Posterior cingulate gyrus (tissue), 11 donors: ENCODE measurements at regions of chr6 and their contacts with region 1.

Region 1: DNA sequence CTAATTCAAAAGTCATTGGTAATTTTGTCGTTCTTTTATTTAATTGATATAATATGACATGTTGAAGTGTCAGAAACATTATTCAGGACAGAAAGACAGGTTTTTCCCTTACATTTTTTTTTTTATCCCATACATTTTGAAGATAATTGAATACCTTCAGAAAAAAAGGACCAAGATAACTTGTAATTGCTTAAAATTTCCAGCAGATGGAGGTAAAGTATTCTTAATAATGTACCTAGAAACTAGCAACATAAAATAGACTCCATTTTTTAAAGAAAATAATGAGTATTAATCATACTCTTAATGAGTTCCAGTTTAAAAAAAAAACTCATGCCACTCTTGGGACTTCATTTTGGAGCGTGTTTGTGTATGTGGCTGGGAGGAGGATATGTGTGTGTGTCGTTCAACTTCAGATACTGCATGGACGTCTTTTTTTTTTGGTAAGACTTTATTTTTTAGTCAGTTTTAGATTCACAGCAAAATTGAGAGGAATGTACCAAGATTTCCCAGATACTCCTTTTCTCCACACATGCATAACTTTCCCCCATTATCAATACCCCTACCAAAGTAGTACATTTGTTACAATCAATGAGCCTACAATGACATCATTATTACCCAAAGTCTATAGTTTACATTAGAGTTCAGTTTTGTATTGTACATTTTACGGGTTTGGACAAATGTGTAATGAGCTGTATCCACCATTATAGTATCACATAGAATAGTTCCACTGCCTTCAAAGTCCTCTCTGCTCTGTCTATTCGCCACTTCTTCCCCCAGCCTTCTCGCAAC is 79.4 kb downstream of the ROS1 start:
- DNase-seq: no peak

Region 2: GRCh38 chr6:117555882-117556498 is 209.7 kb after region 1 on chr6:
- intact Hi-C with region 1: loop called (anchors 2 kb)
- DNase-seq: peak in 3 of 10 donors; percentile 38 to 53 (median 48)

Region 3: GRCh38 chr6:117602151-117602898 is 256.0 kb after region 1 on chr6 and contains the start of gene GOPC:
- intact Hi-C with region 1: loop called (anchors 1 kb)
- DNase-seq: peak; percentile 94 to 99 (median 96)